Mammary epithelial cell (primary cell): ENCODE measurements at regions of chr4 and their contacts with region 1.

Region 1: DNA sequence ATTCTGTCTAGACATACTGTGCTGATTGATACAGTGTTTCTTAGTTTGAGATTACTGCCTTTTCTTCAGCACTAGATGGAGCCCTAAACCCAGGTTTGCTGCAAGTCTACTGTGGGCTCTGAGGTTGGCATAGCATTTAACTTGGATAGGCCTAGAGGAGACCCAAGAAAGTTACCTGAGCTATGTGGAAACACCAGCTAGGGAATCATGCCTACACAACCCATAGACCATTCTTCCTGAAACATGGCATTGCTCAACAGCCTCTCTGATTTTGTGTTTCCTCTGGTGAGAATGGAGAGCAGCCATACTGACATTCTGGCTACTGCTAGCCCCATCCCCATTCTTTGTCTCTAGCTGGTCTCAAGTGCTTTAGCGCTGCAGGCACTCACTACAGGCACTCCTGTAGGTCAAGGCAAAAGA is 287.7 kb upstream of the PCDH18 start:
- DNase-seq: peak; percentile 57
- H3K4me3 ChIP-seq: no peak overlapping the region
- H3K27ac ChIP-seq: no peak overlapping the region
- H3K4me1 ChIP-seq: peaks cover 3% of the 10 kb centered on the region
- H3K27me3 ChIP-seq: no peaks in the 10 kb centered on the region
- CTCF ChIP-seq: peak; percentile 78 to 83

Region 2: DNA sequence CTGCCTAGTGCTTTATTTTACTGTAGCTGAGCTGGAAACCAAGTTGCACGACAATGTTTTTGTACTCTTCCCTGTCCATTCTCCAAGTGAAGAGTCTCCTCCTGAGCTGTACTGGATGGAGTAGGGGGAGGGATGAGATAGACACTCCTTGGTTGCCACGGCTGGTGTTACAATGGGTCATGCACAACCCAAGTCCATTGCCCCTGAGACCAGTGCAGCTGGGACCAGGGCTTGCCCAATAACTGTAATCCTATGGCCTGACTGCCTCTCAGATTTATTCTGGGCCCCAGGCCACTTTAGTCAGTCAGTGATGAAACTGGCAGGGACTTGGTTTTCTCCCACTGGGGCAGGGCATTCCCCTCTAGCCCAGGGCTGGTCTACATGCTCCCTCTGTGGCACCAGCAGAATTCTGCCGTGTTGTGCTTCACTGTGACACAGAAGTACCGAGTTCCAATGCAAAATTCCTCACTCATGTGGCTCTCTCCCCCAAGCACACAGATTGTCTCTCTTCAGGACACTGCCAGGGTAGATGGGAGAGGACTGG is 84.3 kb before region 1 on chr4:
- CTCF ChIA-PET with region 1: no interaction called
- dilution Hi-C with region 1: no loop called
- in situ Hi-C with region 1: no loop called
- intact Hi-C with region 1: loop called (anchors 1 kb)
- DNase-seq: no peak
- H3K4me3 ChIP-seq: no peak overlapping the region
- H3K27ac ChIP-seq: no peak overlapping the region
- H3K4me1 ChIP-seq: no peaks in the 10 kb centered on the region
- H3K27me3 ChIP-seq: no peaks in the 10 kb centered on the region
- CTCF ChIP-seq: no peak

Region 3: DNA sequence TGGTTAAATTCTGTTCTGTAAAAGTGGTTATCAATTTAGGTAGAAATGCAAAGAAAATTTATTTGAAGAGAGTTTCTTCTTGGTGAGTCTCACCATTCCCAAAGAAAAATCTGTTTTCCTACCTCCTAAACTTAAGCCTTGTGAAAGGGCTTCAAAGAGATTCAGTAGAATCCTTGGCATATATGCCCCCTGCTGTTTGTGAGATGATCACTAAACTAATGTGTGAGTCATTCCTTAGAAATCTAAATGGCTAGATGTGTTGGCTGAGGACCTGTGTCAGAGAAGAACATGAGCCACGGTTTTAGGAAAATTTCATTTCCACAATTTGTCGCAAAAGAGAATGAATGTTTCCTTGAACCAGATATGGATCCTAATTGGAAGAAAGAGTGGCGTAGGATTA is 161.3 kb after region 1 on chr4:
- CTCF ChIA-PET with region 1: interaction called, 4 read pairs
- dilution Hi-C with region 1: no loop called
- in situ Hi-C with region 1: no loop called
- intact Hi-C with region 1: loop called (anchors 2 kb)
- DNase-seq: peak; percentile 41
- H3K4me3 ChIP-seq: no peak overlapping the region
- H3K27ac ChIP-seq: no peak overlapping the region
- H3K4me1 ChIP-seq: no peaks in the 10 kb centered on the region
- H3K27me3 ChIP-seq: no peaks in the 10 kb centered on the region
- CTCF ChIP-seq: peak; percentile 28 to 36

Region 4: GRCh38 chr4:138062929-138063328 is 243.0 kb after region 1 on chr4:
- CTCF ChIA-PET with region 1: no interaction called
- dilution Hi-C with region 1: no loop called
- in situ Hi-C with region 1: no loop called
- intact Hi-C with region 1: loop called (anchors 1 kb)
- DNase-seq: peak; percentile 32
- H3K4me3 ChIP-seq: no peak overlapping the region
- H3K27ac ChIP-seq: no peak overlapping the region
- H3K4me1 ChIP-seq: no peaks in the 10 kb centered on the region
- H3K27me3 ChIP-seq: no peaks in the 10 kb centered on the region
- CTCF ChIP-seq: no peak

Region 5: DNA sequence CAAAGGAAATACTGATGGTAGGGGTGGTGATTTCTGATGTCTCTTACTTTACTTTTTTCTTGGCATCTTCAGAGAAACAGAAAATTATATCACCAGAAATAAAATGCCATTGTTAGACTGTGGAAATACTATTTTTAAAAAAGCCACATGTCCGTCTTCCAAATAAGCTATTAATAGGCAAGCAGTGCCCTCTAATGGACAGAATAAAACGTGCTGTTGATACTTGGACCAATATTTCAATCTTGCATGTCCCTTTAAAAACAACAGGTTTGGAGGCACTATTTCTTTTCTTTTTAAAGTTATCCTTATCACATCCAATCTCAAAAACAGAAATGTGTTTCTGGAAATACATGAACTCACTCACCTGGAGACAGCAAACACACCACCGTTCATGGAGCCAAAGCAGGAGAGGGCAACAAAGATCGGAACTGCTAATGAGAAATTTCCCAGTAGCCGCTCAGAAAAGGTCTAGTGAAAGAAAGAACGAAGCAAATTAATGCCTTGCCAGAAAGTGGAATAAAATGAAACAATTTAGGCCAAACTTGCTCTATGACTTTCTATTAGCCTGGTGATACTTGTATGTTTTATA is 363.0 kb after region 1 on chr4:
- CTCF ChIA-PET with region 1: no interaction called
- dilution Hi-C with region 1: no loop called
- in situ Hi-C with region 1: no loop called
- intact Hi-C with region 1: loop called (anchors 2 kb)
- DNase-seq: peak; percentile 45
- H3K4me3 ChIP-seq: no peak overlapping the region
- H3K27ac ChIP-seq: no peak overlapping the region
- H3K4me1 ChIP-seq: peaks cover under 1% of the 10 kb centered on the region
- H3K27me3 ChIP-seq: no peaks in the 10 kb centered on the region
- CTCF ChIP-seq: peak; percentile 59 to 70

Region 6: GRCh38 chr4:138255917-138256597 is 436.1 kb after region 1 on chr4:
- CTCF ChIA-PET with region 1: no interaction called
- dilution Hi-C with region 1: no loop called
- in situ Hi-C with region 1: no loop called
- intact Hi-C with region 1: no loop called
- DNase-seq: no peak
- H3K4me3 ChIP-seq: no peak overlapping the region
- H3K27ac ChIP-seq: no peak overlapping the region
- H3K4me1 ChIP-seq: peaks cover 18% of the 10 kb centered on the region
- H3K27me3 ChIP-seq: no peaks in the 10 kb centered on the region
- CTCF ChIP-seq: no peak

Region 7: DNA sequence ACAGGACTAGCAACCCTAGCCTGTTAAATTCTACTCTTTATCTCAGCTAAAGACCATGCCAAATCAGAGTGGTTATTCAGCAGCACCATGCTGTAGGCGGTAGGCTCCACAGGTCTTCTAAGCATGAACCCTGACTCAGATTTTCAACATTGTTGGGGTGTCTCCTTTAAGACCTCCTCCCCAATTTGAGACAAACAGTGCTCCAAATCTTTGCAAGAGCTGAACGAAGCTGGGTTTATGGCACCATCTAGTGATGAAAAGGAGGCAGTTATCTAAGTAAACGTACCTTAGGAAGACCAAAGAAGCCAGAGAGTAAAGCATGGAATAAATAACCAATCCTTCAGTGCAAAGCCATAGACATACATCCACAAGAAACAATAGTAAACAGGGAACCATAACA is 756.7 kb after region 1 on chr4:
- CTCF ChIA-PET with region 1: interaction called, 4 read pairs
- dilution Hi-C with region 1: no loop called
- in situ Hi-C with region 1: no loop called
- intact Hi-C with region 1: loop called (anchors 1 kb)
- DNase-seq: peak; percentile 27
- H3K4me3 ChIP-seq: no peak overlapping the region
- H3K27ac ChIP-seq: no peak overlapping the region
- H3K4me1 ChIP-seq: no peaks in the 10 kb centered on the region
- H3K27me3 ChIP-seq: no peaks in the 10 kb centered on the region
- CTCF ChIP-seq: peak; percentile 62 to 68

Region 8: GRCh38 chr4:138870737-138871554 is 1051.0 kb after region 1 on chr4:
- CTCF ChIA-PET with region 1: no interaction called
- dilution Hi-C with region 1: no loop called
- in situ Hi-C with region 1: no loop called
- intact Hi-C with region 1: loop called (anchors 10 kb)
- DNase-seq: peak; percentile 52
- H3K4me3 ChIP-seq: no peak overlapping the region
- H3K27ac ChIP-seq: no peak overlapping the region
- H3K4me1 ChIP-seq: peaks cover 6% of the 10 kb centered on the region
- H3K27me3 ChIP-seq: no peaks in the 10 kb centered on the region
- CTCF ChIP-seq: peak; percentile 79 to 80